GM18951 (cell line): ENCODE measurements at regions of chr6 and their contacts with region 1.

Region 1: DNA sequence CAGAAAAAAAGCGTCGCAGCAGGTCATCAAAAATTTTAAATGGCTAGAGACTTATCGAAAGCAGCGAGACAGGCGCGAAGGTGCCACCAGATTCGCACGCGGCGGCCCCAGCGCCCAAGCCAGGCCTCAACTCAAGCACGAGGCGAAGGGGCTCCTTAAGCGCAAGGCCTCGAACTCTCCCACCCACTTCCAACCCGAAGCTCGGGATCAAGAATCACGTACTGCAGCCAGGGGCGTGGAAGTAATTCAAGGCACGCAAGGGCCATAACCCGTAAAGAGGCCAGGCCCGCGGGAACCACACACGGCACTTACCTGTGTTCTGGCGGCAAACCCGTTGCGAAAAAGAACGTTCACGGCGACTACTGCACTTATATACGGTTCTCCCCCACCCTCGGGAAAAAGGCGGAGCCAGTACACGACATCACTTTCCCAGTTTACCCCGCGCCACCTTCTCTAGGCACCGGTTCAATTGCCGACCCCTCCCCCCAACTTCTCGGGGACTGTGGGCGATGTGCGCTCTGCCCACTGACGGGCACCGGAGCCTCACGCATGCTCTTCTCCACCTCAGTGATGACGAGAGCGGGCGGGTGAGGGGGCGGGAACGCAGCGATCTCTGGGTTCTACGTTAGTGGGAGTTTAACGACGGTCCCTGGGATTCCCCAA is at the start of gene EEF1A1:
- POLR2A ChIP-seq: peak; percentile 100

Region 2: DNA sequence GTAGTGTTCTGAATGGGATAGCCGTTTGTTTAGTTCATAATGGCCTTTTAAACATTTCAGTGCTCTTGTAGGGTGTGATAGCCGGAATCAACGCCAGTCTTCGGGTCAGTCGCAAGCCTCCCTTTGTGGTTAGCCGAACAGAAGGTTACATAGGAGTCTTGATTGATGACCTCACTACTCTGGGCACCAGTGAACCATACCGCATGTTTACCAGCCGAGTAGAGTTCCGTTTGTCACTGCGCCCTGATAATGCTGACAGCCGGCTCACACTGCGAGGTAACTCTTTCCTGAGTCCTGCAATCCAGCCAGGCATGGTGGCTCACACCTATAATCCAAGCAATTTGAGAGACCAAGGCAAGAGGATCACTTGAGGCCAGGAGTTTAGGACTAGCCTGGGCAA is 38.9 kb before region 1 on chr6:
- in situ Hi-C with region 1: no loop called
- POLR2A ChIP-seq: no peak

Region 3: GRCh38 chr6:73579851-73580246 is 59.0 kb after region 1 on chr6:
- in situ Hi-C with region 1: loop called (anchors 10 kb)
- POLR2A ChIP-seq: no peak